ENCODE measurements at regions of chr17 and their contacts with region 1.

Region 1: DNA sequence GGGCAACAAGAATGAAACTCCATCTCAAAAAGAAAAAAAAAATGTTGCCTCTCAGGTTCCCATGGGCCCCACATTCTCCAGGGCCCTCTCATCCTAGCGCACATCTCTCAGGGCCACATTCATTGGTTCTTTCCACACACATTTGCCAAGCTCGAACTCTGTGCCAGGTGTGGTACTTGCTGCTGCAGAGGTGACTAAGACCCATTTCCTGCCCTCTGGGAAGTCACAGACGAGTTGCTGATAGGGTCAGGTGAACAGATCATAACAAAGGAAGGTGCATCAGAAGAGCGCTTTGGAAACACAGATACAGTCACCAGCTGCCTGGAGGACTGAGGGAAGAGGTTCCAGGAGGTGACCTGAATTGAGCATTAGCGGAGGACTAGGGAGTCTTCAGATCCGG is 1.0 kb downstream of the GSDMA start:
- DNase-seq: peak; percentile 94
- H3K4me3 Mint-ChIP-seq: no peak overlapping the region
- H3K27ac Mint-ChIP-seq: peak overlapping the region; percentile 0
- H3K4me1 Mint-ChIP-seq: peaks cover 45% of the 10 kb centered on the region
- H3K27me3 Mint-ChIP-seq: peaks cover 32% of the 10 kb centered on the region
- CTCF ChIP-seq: no peak

Region 2: GRCh38 chr17:39668199-39668966 is 295.4 kb before region 1 on chr17 and contains the start of gene PNMT:
- CTCF ChIA-PET with region 1: interaction called, 8,195 read pairs
- intact Hi-C with region 1: loop called (anchors 1 kb)
- DNase-seq: peak; percentile 100
- H3K4me3 Mint-ChIP-seq: peak within 1 kb of the TSS; percentile 24
- H3K27ac Mint-ChIP-seq: peak within 1 kb of the TSS; percentile 0
- H3K4me1 Mint-ChIP-seq: peaks cover 65% of the 10 kb centered on the region
- H3K27me3 Mint-ChIP-seq: peaks cover 69% of the 10 kb centered on the region
- CTCF ChIP-seq: no peak
- total RNA-seq, gene PNMT: 1.3 and 3.2 TPM in 2 replicates

Region 3: GRCh38 chr17:39722965-39723848 is 240.6 kb before region 1 on chr17:
- CTCF ChIA-PET with region 1: interaction called, 1,335 read pairs
- intact Hi-C with region 1: no loop called
- DNase-seq: peak; percentile 75
- H3K4me3 Mint-ChIP-seq: peak overlapping the region; percentile 0
- H3K27ac Mint-ChIP-seq: peak overlapping the region; percentile 28
- H3K4me1 Mint-ChIP-seq: peaks cover 38% of the 10 kb centered on the region
- H3K27me3 Mint-ChIP-seq: no peaks in the 10 kb centered on the region
- CTCF ChIP-seq: no peak

Region 4: DNA sequence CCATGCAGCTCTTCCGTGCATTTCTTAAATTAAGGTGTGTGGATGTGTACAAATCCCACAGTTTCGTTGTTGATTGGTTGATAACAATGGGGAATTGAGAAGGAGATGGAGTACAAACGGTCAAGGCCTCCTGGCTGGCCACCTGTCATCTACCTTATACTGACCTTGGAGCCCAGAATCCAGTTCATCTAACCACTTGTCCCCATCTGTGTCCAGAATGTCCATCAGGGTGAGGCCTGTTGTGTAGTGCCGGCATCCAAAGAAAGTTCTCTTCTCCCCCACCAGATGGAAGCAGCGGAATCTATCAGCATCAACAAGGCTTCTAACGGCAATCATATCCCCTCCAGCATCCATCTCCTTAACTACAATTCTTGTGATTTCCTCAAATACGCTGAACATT is 46.9 kb before region 1 on chr17:
- CTCF ChIA-PET with region 1: interaction called, 6,506 read pairs
- intact Hi-C with region 1: loop called (anchors 1 kb)
- DNase-seq: peak; percentile 94
- H3K4me3 Mint-ChIP-seq: no peak overlapping the region
- H3K27ac Mint-ChIP-seq: no peak overlapping the region
- H3K4me1 Mint-ChIP-seq: peaks cover 24% of the 10 kb centered on the region
- H3K27me3 Mint-ChIP-seq: no peaks in the 10 kb centered on the region
- CTCF ChIP-seq: no peak

Region 5: GRCh38 chr17:39952680-39953470 is 11.0 kb before region 1 on chr17:
- CTCF ChIA-PET with region 1: interaction called, 4,038 read pairs
- intact Hi-C with region 1: loop called (anchors 1 kb)
- DNase-seq: peak; percentile 100
- H3K4me3 Mint-ChIP-seq: peak overlapping the region; percentile 58
- H3K27ac Mint-ChIP-seq: peak overlapping the region; percentile 18
- H3K4me1 Mint-ChIP-seq: peaks cover 42% of the 10 kb centered on the region
- H3K27me3 Mint-ChIP-seq: peaks cover 15% of the 10 kb centered on the region
- CTCF ChIP-seq: no peak

Region 6: GRCh38 chr17:40474419-40475002 is 510.7 kb after region 1 on chr17:
- CTCF ChIA-PET with region 1: interaction called, 25 read pairs
- intact Hi-C with region 1: no loop called
- DNase-seq: no peak
- H3K4me3 Mint-ChIP-seq: no peak overlapping the region
- H3K27ac Mint-ChIP-seq: no peak overlapping the region
- H3K4me1 Mint-ChIP-seq: no peaks in the 10 kb centered on the region
- H3K27me3 Mint-ChIP-seq: peaks cover 65% of the 10 kb centered on the region
- CTCF ChIP-seq: no peak

Region 7: DNA sequence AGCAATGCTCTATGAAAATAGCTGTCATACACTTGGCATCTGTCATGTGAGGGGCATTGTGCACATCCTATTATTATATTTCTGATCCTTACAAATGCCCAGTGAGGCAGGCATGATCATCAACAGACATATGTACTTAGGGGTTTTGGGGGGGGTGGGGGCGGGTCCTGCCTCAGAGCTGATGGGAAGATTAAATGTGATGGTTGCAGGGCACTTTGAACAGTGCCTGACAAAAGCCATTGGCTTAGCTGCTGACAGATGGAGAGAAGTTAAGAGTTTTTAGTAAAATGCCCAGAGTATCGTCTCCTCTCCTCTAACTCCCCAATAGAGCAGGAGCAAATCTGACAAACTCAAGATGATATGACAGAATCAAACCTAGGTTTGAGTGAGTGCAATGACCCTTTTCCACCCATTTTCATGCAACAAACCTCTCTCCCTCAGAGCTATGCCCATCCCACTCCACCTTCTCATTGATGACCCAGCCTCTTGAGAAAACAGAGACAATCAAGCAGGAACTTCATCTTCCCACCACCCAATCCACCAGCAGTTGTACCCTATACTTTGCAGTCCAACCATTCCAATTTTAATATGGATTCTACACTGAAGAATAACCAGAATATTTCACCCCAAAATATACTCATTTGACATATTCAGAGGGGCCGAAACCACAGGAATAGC is 1896.6 kb after region 1 on chr17:
- CTCF ChIA-PET with region 1: no interaction called
- intact Hi-C with region 1: no loop called
- DNase-seq: no peak
- H3K4me3 Mint-ChIP-seq: no peak overlapping the region
- H3K27ac Mint-ChIP-seq: no peak overlapping the region
- H3K4me1 Mint-ChIP-seq: peaks cover 9% of the 10 kb centered on the region
- H3K27me3 Mint-ChIP-seq: no peaks in the 10 kb centered on the region
- CTCF ChIP-seq: no peak